Left ventricle myocardium superior (tissue), 1 donor: ENCODE measurements at regions of chr3 and their contacts with region 1.

Region 1: GRCh38 chr3:46297658-46298463 is 55.6 kb downstream of the CCR3 start:
- DNase-seq: no peak
- ATAC-seq: peak; percentile 44

Region 2: DNA sequence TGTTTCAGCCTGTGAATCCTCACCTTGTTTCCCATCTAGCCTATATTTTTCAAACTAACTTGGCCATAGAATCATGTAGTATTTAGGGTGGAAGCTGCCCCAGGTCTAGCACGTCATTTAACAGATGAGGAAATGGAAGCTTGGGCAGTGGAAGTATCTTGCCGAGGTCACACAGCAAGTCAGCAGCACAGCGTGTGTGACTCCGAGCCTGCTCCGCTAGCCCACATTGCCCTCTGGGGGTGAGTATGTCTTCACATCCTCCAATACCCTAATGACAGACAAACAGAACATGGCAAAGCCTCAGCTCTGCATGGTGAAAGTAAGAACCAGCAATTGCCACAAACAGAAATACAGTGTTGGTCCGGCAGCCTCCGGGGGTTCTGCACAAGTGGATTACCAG is 70.7 kb after region 1 on chr3:
- intact Hi-C with region 1: loop called (anchors 10 kb)
- DNase-seq: peak; percentile 66
- ATAC-seq: peak; percentile 80